ENCODE measurements at regions of chr19 and their contacts with region 1.

Region 1: GRCh38 chr19:19459707-19460251 is 54.3 kb downstream of the GATAD2A start:
- DNase-seq: peak in 1 of 2 donors; percentile 50
- ATAC-seq: no peak
- H3K4me3 ChIP-seq: peak overlapping the region; percentile 41
- H3K27ac ChIP-seq: peak overlapping the region; percentile 81
- H3K4me1 ChIP-seq: peaks cover 80% of the 10 kb centered on the region
- H3K27me3 ChIP-seq: no peaks in the 10 kb centered on the region
- CTCF ChIP-seq: no peak

Region 2: DNA sequence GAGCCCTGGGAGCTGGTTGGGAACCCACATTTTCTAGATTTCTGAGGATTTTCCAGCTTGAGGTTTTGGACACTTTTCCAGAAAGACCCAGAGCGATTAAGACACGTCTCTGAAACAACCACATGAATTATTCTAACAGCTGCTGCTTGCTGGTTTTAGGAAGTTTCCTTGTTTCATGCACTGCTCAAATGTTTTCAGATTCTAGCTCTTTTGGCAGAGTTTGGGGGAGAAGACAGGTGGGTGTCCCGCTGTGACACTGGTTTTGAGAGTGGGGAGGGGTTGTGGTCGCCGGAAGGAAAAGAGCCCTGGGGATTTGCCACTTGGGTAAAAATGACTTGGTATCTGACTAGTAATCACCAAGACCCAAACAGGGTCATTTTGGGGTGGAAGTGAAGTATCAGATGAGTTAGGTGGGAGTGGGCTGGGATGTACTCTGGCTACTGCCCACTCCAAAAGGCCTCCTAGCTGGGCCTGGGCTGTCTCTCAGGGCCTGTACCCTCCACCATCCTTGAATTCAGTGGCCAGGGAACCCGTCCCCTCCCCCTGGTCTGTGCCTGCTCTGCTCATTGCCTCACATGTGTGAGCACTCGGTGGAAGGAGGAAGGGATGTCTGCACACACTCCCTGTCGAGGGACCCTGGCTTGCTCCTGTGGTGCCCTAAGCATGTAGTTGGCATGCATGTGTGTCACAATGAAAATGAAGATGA is 41.1 kb before region 1 on chr19:
- intact Hi-C with region 1: loop called in 1 of 2 experiments (anchors 5 kb)
- DNase-seq: no peak
- ATAC-seq: peak in 3 of 4 donors; percentile 26 to 47 (median 38)
- H3K4me3 ChIP-seq: no peak overlapping the region
- H3K27ac ChIP-seq: no peak overlapping the region
- H3K4me1 ChIP-seq: peaks cover 53% of the 10 kb centered on the region
- H3K27me3 ChIP-seq: no peaks in the 10 kb centered on the region
- CTCF ChIP-seq: no peak

Region 3: GRCh38 chr19:19434483-19435045 is 25.2 kb before region 1 on chr19:
- intact Hi-C with region 1: no loop called
- DNase-seq: peak; percentile 66 to 80
- ATAC-seq: peak; percentile 78 to 90 (median 88)
- H3K4me3 ChIP-seq: no peak overlapping the region
- H3K27ac ChIP-seq: peak overlapping the region; percentile 65
- H3K4me1 ChIP-seq: peaks cover 29% of the 10 kb centered on the region
- H3K27me3 ChIP-seq: no peaks in the 10 kb centered on the region
- CTCF ChIP-seq: no peak